Caco-2 (cell line): ENCODE measurements at regions of chr1 and their contacts with region 1.

Region 1: DNA sequence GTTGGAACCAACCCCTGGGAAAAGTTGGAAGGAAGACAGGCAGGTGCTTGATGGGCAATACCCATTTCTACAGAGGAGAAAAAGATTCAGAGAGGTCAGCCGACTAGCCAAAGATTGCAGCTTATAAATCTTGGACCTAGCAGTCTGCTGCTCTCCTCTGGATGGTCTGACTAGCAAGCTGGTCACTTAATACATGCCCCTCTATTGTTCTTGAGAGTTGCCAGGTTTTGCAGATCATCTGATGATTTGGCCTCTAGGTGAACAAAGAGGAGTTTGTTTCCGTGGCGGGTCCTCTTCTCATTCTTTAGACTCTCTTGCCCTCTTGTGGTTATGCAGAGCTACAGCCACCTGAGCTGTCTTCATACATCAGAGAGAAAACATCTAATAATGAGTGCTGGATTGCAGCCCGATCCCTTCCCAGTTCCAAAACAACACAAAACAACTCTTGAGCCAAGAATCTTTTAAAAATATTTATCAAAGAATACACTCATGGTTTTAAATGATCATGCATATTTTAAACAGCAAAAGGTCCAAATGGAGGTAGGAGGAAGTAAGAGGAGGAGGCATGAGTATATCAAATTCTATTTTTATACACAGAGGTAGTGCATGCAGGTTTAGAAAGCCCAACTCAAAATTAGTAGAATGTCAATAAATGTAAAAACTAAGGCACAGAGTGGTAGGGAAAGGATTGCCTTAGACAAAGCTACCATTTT is 115.7 kb downstream of the SLC30A10 start:
- DNase-seq: peak; percentile 63 to 69
- H3K4me3 ChIP-seq: no peak overlapping the region
- H3K4me3 Mint-ChIP-seq: no peak overlapping the region
- H3K27ac Mint-ChIP-seq: no peak overlapping the region
- H3K4me1 ChIP-seq: no peaks in the 10 kb centered on the region
- H3K4me1 Mint-ChIP-seq: no peaks in the 10 kb centered on the region
- H3K27me3 ChIP-seq: no peaks in the 10 kb centered on the region
- H3K27me3 Mint-ChIP-seq: peaks cover 20% of the 10 kb centered on the region
- CTCF ChIP-seq: peak; percentile 88 to 96

Region 2: GRCh38 chr1:218330043-218330623 is 1482.5 kb before region 1 on chr1:
- CTCF ChIA-PET with region 1: no interaction called
- POLR2A ChIA-PET with region 1: no interaction called
- intact Hi-C with region 1: loop called (anchors 5 kb)
- DNase-seq: peak in 1 of 2 experiments; percentile 9
- H3K4me3 ChIP-seq: no peak overlapping the region
- H3K4me3 Mint-ChIP-seq: no peak overlapping the region
- H3K27ac Mint-ChIP-seq: no peak overlapping the region
- H3K4me1 ChIP-seq: no peaks in the 10 kb centered on the region
- H3K4me1 Mint-ChIP-seq: no peaks in the 10 kb centered on the region
- H3K27me3 ChIP-seq: no peaks in the 10 kb centered on the region
- H3K27me3 Mint-ChIP-seq: no peaks in the 10 kb centered on the region
- CTCF ChIP-seq: peak; percentile 28 to 69

Region 3: DNA sequence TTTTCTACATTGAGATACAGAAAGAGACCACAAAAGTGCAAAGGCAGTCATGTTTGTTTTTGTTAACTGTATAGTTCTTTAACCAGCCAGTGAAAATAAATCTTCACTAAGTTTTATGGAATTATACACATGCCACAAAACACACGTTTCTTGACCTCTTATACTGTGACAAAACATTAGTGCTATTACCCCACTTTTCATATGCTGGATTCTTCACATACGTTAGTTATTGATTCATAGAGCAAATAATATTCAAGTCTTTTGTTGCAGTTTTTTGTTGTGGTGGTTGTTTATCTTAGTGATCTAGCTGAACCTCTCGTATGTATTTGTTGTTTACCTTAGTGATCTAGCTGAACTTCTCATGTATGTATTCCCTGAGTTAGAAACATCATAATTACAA is 611.0 kb before region 1 on chr1:
- CTCF ChIA-PET with region 1: no interaction called
- POLR2A ChIA-PET with region 1: no interaction called
- intact Hi-C with region 1: loop called (anchors 5 kb)
- DNase-seq: no peak
- H3K4me3 ChIP-seq: no peak overlapping the region
- H3K4me3 Mint-ChIP-seq: no peak overlapping the region
- H3K27ac Mint-ChIP-seq: no peak overlapping the region
- H3K4me1 ChIP-seq: no peaks in the 10 kb centered on the region
- H3K4me1 Mint-ChIP-seq: no peaks in the 10 kb centered on the region
- H3K27me3 ChIP-seq: no peaks in the 10 kb centered on the region
- H3K27me3 Mint-ChIP-seq: no peaks in the 10 kb centered on the region
- CTCF ChIP-seq: no peak

Region 4: DNA sequence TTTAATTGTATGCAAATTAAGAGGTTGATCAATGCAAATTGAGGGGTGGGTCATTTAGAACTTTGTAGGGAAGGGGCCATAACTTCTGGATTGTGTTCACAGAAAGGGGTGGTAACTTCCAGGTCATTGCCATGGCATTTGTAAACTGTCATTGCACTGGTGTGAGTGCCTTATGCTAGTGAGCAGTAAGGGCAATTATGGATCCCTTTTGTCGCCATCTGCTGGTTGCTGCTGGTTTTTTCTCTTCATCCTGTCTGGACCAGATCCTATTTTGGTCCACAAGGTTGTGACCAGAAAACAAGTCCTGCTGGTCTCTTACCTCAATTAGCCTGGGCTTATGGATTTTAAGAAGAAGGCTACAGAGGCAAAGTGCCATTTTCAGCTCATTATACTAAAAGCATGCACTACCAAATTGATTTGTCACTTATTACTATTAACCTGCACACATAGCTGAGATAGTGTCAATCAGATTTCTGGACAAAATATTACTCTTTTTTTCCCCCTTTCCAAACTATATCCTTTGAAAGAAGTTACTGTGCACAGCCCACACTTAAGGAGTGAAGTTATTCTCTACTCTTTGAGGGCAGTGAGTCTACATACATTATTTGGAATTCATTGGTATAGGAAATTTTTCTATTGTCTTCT is 395.9 kb before region 1 on chr1:
- CTCF ChIA-PET with region 1: no interaction called
- POLR2A ChIA-PET with region 1: no interaction called
- intact Hi-C with region 1: loop called (anchors 1 kb)
- DNase-seq: peak; percentile 64 to 73
- H3K4me3 ChIP-seq: no peak overlapping the region
- H3K4me3 Mint-ChIP-seq: no peak overlapping the region
- H3K27ac Mint-ChIP-seq: no peak overlapping the region
- H3K4me1 ChIP-seq: peaks cover 4% of the 10 kb centered on the region; the same call in 1 of the 2 replicates
- H3K4me1 Mint-ChIP-seq: no peaks in the 10 kb centered on the region
- H3K27me3 ChIP-seq: no peaks in the 10 kb centered on the region
- H3K27me3 Mint-ChIP-seq: no peaks in the 10 kb centered on the region
- CTCF ChIP-seq: peak; percentile 67 to 69

Region 5: GRCh38 chr1:219566951-219567947 is 245.4 kb before region 1 on chr1:
- CTCF ChIA-PET with region 1: no interaction called
- POLR2A ChIA-PET with region 1: no interaction called
- intact Hi-C with region 1: loop called (anchors 2 kb)
- DNase-seq: peak in 1 of 2 experiments; percentile 20
- H3K4me3 ChIP-seq: no peak overlapping the region
- H3K4me3 Mint-ChIP-seq: no peak overlapping the region
- H3K27ac Mint-ChIP-seq: no peak overlapping the region
- H3K4me1 ChIP-seq: no peaks in the 10 kb centered on the region
- H3K4me1 Mint-ChIP-seq: no peaks in the 10 kb centered on the region
- H3K27me3 ChIP-seq: no peaks in the 10 kb centered on the region
- H3K27me3 Mint-ChIP-seq: peaks cover 3% of the 10 kb centered on the region
- CTCF ChIP-seq: peak; percentile 48 to 75

Region 6: GRCh38 chr1:219660666-219661463 is 151.8 kb before region 1 on chr1:
- CTCF ChIA-PET with region 1: no interaction called
- POLR2A ChIA-PET with region 1: no interaction called
- intact Hi-C with region 1: loop called (anchors 1 kb)
- DNase-seq: peak; percentile 67 to 75
- H3K4me3 ChIP-seq: no peak overlapping the region
- H3K4me3 Mint-ChIP-seq: no peak overlapping the region
- H3K27ac Mint-ChIP-seq: no peak overlapping the region
- H3K4me1 ChIP-seq: no peaks in the 10 kb centered on the region
- H3K4me1 Mint-ChIP-seq: no peaks in the 10 kb centered on the region
- H3K27me3 ChIP-seq: no peaks in the 10 kb centered on the region
- H3K27me3 Mint-ChIP-seq: peaks cover 2% of the 10 kb centered on the region
- CTCF ChIP-seq: peak; percentile 43 to 71

Region 7: GRCh38 chr1:219871427-219872057 is 58.9 kb after region 1 on chr1:
- CTCF ChIA-PET with region 1: no interaction called
- POLR2A ChIA-PET with region 1: no interaction called
- intact Hi-C with region 1: no loop called
- DNase-seq: no peak
- H3K4me3 ChIP-seq: no peak overlapping the region
- H3K4me3 Mint-ChIP-seq: no peak overlapping the region
- H3K27ac Mint-ChIP-seq: no peak overlapping the region
- H3K4me1 ChIP-seq: no peaks in the 10 kb centered on the region
- H3K4me1 Mint-ChIP-seq: peaks cover 6% of the 10 kb centered on the region
- H3K27me3 ChIP-seq: no peaks in the 10 kb centered on the region
- H3K27me3 Mint-ChIP-seq: no peaks in the 10 kb centered on the region
- CTCF ChIP-seq: no peak